ENCODE measurements at regions of chr1 and their contacts with region 1.

Region 1: DNA sequence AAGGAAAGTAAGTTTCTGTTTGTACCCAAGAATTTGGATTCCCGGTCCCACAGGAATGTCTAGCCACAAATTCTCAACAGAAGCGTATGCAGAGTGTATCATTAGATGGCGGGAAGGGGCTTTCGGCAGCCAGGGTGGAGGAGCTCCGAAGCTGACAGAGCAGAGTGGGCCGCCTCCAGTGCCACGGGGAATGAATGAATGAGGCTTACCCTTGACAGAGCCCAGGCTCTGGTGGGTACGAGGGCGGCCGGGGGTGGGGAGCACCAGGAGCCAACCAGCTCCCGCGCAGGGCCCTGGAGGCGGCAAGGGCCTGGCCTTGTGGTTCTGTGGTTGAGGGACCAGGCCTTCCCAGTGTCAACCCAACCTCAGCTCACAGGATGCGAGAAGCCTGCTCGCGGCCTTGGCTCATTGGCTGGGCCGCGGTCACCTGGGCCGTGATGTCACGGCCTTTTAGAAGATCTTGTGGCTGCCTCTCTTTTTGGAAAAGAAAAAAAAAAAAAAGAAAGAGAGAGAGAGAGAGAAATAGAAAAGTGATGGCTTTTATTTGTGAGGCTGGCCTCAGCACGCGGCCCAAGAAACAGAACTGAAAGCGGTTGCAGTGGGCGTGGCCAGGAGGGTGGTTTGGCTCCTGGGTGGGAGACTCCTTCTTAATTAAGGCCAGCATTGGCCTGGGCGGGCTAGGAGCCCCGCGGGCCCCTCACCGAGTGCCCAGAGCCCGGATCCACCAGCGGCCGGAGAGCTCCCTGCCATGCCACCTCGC is 34.9 kb upstream of the RUNX3 start:
- DNase-seq: peak; percentile 61 to 95 (median 88)
- ATAC-seq: peak; percentile 85 to 93 (median 88)
- H3K4me3 ChIP-seq: peak overlapping the region in 1 of 2 donors; percentile 53
- H3K4me3 Mint-ChIP-seq: peak overlapping the region; percentile 73 to 80 (median 76)
- H3K27ac ChIP-seq: peak overlapping the region; percentile 91
- H3K27ac Mint-ChIP-seq: peak overlapping the region; percentile 91 to 94
- H3K4me1 ChIP-seq: peaks cover 21 to 83% of the 10 kb centered on the region in 2 experiments
- H3K4me1 Mint-ChIP-seq: peaks cover 71 to 77% (median 71%) of the 10 kb centered on the region in 3 donors
- H3K27me3 ChIP-seq: peaks cover 0 to 5% of the 10 kb centered on the region in 2 experiments
- H3K27me3 Mint-ChIP-seq: no peaks in the 10 kb centered on the region

Region 2: GRCh38 chr1:24659993-24660665 is 304.9 kb before region 1 on chr1:
- CTCF ChIA-PET with region 1: no interaction called
- POLR2A ChIA-PET with region 1: interaction called in 1 of 2 experiments, 16 read pairs
- DNase-seq: no peak
- ATAC-seq: peak in 1 of 4 experiments; percentile 43
- H3K4me3 ChIP-seq: no peak overlapping the region
- H3K4me3 Mint-ChIP-seq: no peak overlapping the region
- H3K27ac ChIP-seq: no peak overlapping the region
- H3K27ac Mint-ChIP-seq: peak overlapping the region; percentile 61 to 78
- H3K4me1 ChIP-seq: no peaks in the 10 kb centered on the region
- H3K4me1 Mint-ChIP-seq: peaks cover 30 to 37% (median 34%) of the 10 kb centered on the region in 3 donors
- H3K27me3 ChIP-seq: no peaks in the 10 kb centered on the region
- H3K27me3 Mint-ChIP-seq: no peaks in the 10 kb centered on the region

Region 3: DNA sequence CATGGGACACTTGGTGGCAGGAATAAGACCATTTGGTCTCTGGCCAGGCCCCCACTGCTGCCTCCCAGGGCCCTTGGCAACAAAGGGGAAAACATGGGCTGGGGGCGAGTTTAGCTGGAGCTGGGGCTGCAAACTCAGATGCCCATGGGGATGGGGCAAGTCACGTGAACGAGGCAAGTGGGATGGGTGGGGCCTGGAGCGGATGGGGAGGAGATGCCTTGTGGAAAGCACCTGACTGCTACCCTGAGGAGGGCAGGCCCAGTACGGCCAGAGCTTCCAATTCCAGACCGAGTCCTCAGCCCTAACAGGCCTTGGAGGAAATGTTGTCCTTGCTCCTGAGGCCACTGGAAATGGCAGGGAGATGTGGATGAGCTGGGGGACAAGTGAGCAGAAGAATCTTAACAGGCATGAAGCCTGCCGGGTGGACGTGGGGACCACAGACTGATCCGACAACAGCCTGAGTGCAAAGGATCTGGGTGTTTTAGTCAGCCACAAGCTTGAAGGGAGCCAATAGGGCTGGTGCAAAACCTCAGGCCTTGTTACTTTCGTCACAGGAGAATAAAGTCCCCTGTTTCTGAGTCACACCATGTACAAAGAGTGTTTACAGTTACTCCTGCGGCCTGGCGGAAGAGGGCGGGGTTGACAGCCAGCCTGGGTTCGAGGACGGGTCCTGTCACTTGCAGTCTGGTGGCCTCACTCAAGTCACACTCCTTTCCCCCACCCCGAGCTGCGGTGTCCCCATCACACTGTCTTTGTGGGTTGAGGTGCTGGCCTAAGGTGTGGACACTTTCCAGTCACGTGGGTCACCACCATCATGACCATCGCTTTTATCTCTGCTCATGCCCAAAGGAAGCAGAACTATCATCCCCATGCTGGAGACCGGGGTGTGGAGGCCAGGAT is 54.0 kb before region 1 on chr1:
- CTCF ChIA-PET with region 1: no interaction called
- POLR2A ChIA-PET with region 1: interaction called in 1 of 2 experiments, 10 read pairs
- DNase-seq: peak; percentile 43 to 92 (median 81)
- ATAC-seq: peak; percentile 83 to 88 (median 86)
- H3K4me3 ChIP-seq: peak overlapping the region in 1 of 2 donors; percentile 25
- H3K4me3 Mint-ChIP-seq: peak overlapping the region; percentile 37 to 65 (median 62)
- H3K27ac ChIP-seq: peak overlapping the region; percentile 96
- H3K27ac Mint-ChIP-seq: peak overlapping the region; percentile 93 to 97
- H3K4me1 ChIP-seq: peaks cover 0 to 97% of the 10 kb centered on the region in 2 experiments
- H3K4me1 Mint-ChIP-seq: peaks cover 57 to 86% (median 75%) of the 10 kb centered on the region in 3 donors
- H3K27me3 ChIP-seq: no peaks in the 10 kb centered on the region
- H3K27me3 Mint-ChIP-seq: no peaks in the 10 kb centered on the region

Region 4: GRCh38 chr1:24954022-24954421 is 11.0 kb before region 1 on chr1:
- CTCF ChIA-PET with region 1: interaction called in 1 of 2 experiments, 3 read pairs
- POLR2A ChIA-PET with region 1: interaction called in 1 of 2 experiments, 10 read pairs
- DNase-seq: no peak
- ATAC-seq: peak in 1 of 4 experiments; percentile 22
- H3K4me3 ChIP-seq: no peak overlapping the region
- H3K4me3 Mint-ChIP-seq: peak overlapping the region in 1 of 3 donors; percentile 63
- H3K27ac ChIP-seq: peak overlapping the region; percentile 27
- H3K27ac Mint-ChIP-seq: peak overlapping the region; percentile 86 to 93
- H3K4me1 ChIP-seq: peaks cover 46 to 90% of the 10 kb centered on the region in 2 experiments
- H3K4me1 Mint-ChIP-seq: peaks cover 73 to 82% (median 78%) of the 10 kb centered on the region in 3 donors
- H3K27me3 ChIP-seq: no peaks in the 10 kb centered on the region
- H3K27me3 Mint-ChIP-seq: no peaks in the 10 kb centered on the region

Region 5: GRCh38 chr1:24996983-24997893 is 32.2 kb after region 1 on chr1:
- CTCF ChIA-PET with region 1: interaction called in 1 of 2 experiments, 8 read pairs
- POLR2A ChIA-PET with region 1: interaction called in 1 of 2 experiments, 10 read pairs
- DNase-seq: peak in 32 of 35 experiments; percentile 15 to 69 (median 42)
- ATAC-seq: peak; percentile 57 to 73 (median 63)
- H3K4me3 ChIP-seq: no peak overlapping the region
- H3K4me3 Mint-ChIP-seq: peak overlapping the region in 2 of 3 donors; percentile 4 to 87
- H3K27ac ChIP-seq: peak overlapping the region; percentile 62
- H3K27ac Mint-ChIP-seq: peak overlapping the region; percentile 86 to 99
- H3K4me1 ChIP-seq: peaks cover 46 to 88% of the 10 kb centered on the region in 2 experiments
- H3K4me1 Mint-ChIP-seq: peaks cover 85 to 92% (median 87%) of the 10 kb centered on the region in 3 donors
- H3K27me3 ChIP-seq: no peaks in the 10 kb centered on the region
- H3K27me3 Mint-ChIP-seq: no peaks in the 10 kb centered on the region

Region 6: GRCh38 chr1:25022361-25023189 is 57.6 kb after region 1 on chr1:
- CTCF ChIA-PET with region 1: interaction called, 5 to 11 read pairs
- POLR2A ChIA-PET with region 1: interaction called in 1 of 2 experiments, 7 read pairs
- DNase-seq: peak; percentile 79 to 99 (median 96)
- ATAC-seq: peak; percentile 87 to 90 (median 88)
- H3K4me3 ChIP-seq: peak overlapping the region; percentile 39 to 41
- H3K4me3 Mint-ChIP-seq: peak overlapping the region; percentile 67 to 77 (median 70)
- H3K27ac ChIP-seq: peak overlapping the region; percentile 100
- H3K27ac Mint-ChIP-seq: peak overlapping the region; percentile 95 to 98
- H3K4me1 ChIP-seq: peaks cover 41 to 100% of the 10 kb centered on the region in 2 experiments
- H3K4me1 Mint-ChIP-seq: peaks cover 72 to 89% (median 89%) of the 10 kb centered on the region in 3 donors
- H3K27me3 ChIP-seq: no peaks in the 10 kb centered on the region
- H3K27me3 Mint-ChIP-seq: no peaks in the 10 kb centered on the region

Region 7: GRCh38 chr1:25037174-25038074 is 72.4 kb after region 1 on chr1:
- CTCF ChIA-PET with region 1: interaction called, 5 to 21 read pairs
- POLR2A ChIA-PET with region 1: no interaction called
- DNase-seq: peak in 33 of 35 experiments; percentile 32 to 81 (median 58)
- ATAC-seq: peak; percentile 59 to 73 (median 64)
- H3K4me3 ChIP-seq: no peak overlapping the region
- H3K4me3 Mint-ChIP-seq: peak overlapping the region in 1 of 3 donors; percentile 21
- H3K27ac ChIP-seq: peak overlapping the region; percentile 28
- H3K27ac Mint-ChIP-seq: no peak overlapping the region
- H3K4me1 ChIP-seq: peaks cover 24 to 74% of the 10 kb centered on the region in 2 experiments
- H3K4me1 Mint-ChIP-seq: peaks cover 39 to 40% (median 40%) of the 10 kb centered on the region in 3 donors
- H3K27me3 ChIP-seq: peaks cover 0 to 4% of the 10 kb centered on the region in 2 experiments
- H3K27me3 Mint-ChIP-seq: no peaks in the 10 kb centered on the region

Region 8: DNA sequence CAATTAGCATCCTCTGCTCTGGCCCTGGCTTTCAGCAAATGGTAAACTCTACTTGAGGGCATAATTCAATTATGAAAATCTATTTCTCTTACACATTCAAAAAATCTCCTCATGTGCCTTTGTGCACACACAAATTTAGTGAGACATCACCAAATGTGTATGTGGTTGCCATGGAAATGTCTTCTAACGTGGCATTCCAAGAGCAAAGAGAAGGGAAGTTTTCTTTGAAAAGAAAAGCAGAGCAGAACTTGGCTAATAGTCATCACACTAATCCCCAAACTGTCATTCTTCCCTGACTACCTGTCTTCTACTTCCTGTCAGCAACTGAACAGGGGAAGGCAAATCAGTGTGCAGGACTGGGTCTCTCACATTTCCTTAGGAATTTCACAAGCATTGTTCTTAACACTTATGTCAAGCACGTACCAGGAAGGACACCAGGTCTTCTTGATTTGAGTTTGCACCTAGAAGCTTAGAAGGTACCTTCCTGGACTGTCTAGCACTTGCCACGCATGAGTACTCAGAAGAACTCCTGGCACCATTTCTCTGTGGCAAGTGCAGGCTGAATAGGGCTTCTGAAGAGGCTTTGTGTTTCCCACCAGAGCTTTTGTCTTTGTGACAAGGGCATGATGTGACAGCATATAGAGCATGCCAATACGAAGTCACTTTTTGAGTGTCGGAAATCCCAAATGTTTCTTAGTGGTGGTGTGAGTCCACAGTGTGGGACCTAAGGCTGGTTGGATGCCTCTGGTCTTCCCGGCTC is 683.9 kb after region 1 on chr1:
- CTCF ChIA-PET with region 1: no interaction called
- POLR2A ChIA-PET with region 1: no interaction called
- DNase-seq: peak in 1 of 35 experiments; percentile 6
- ATAC-seq: no peak
- H3K4me3 ChIP-seq: no peak overlapping the region
- H3K4me3 Mint-ChIP-seq: no peak overlapping the region
- H3K27ac ChIP-seq: no peak overlapping the region
- H3K27ac Mint-ChIP-seq: peak overlapping the region; percentile 15 to 72
- H3K4me1 ChIP-seq: peaks cover 40 to 80% of the 10 kb centered on the region in 2 experiments
- H3K4me1 Mint-ChIP-seq: peaks cover 60 to 71% (median 68%) of the 10 kb centered on the region in 3 donors
- H3K27me3 ChIP-seq: peaks cover 0 to 4% of the 10 kb centered on the region in 2 experiments
- H3K27me3 Mint-ChIP-seq: no peaks in the 10 kb centered on the region

Measured in T-cell (primary cell).